ENCODE measurements at regions of chr11 and their contacts with region 1.

Region 1: GRCh38 chr11:46410021-46410420 is 18.4 kb upstream of the CHRM4 start:
- DNase-seq: peak in 1 of 2 experiments; percentile 55
- H3K4me3 ChIP-seq: no peak overlapping the region
- H3K27ac ChIP-seq: no peak overlapping the region
- H3K4me1 ChIP-seq: peaks cover 0 to 2% (median 0%) of the 10 kb centered on the region in 4 experiments; a peak in 1 of 7 replicates
- H3K27me3 ChIP-seq: no peaks in the 10 kb centered on the region
- CTCF ChIP-seq: peak; percentile 62 to 81 (median 72)
- EP300 ChIP-seq: no peak
- POLR2A ChIP-seq: no peak
- RAD21 ChIP-seq: peak; percentile 72 to 76

Region 2: DNA sequence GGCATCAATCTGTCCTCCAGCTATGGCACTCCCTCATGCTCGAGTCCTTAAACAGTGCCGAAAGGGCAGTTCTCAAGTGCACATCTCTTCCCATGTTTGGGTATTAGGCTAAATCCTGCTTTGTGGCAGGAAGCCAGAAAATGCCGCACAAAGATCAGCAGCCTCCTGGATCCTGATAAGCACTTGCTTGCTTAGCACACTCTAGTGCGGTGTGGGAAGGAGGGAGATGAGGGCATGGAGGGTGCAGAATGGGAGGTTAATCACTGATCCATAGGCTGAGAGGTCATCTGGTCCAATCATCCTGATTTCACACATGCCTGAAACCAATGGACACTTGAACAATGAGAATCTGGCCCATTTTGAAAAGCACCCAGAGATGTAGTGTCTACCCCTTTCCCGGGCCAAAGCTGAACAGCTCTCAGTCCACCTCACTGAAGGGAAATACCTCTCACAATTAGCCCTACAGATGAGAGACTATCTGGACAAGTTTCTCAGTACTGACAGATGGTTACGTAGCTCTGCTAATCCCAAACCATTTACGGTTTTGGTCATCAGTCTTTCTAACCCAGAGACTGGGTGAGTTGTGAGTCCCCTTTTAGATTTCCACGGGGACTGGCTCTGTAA is 11.3 kb after region 1 on chr11:
- CTCF ChIA-PET with region 1: interaction called, 18 read pairs
- POLR2A ChIA-PET with region 1: interaction called, 4 read pairs
- DNase-seq: no peak
- H3K4me3 ChIP-seq: no peak overlapping the region
- H3K27ac ChIP-seq: no peak overlapping the region
- H3K4me1 ChIP-seq: 0 out of 7 replicates have a peak, but pooled peaks cover 0 to 2% (median 0%) of the 10 kb centered on the region in 4 experiments
- H3K27me3 ChIP-seq: no peaks in the 10 kb centered on the region
- CTCF ChIP-seq: no peak
- EP300 ChIP-seq: no peak
- POLR2A ChIP-seq: no peak
- RAD21 ChIP-seq: no peak

Region 3: GRCh38 chr11:46537537-46538295 is 127.7 kb after region 1 on chr11:
- CTCF ChIA-PET with region 1: interaction called, 11 read pairs
- POLR2A ChIA-PET with region 1: no interaction called
- DNase-seq: peak; percentile 78 to 79
- H3K4me3 ChIP-seq: peak overlapping the region in 1 of 4 experiments; percentile 14; a peak in 2 of 8 replicates
- H3K27ac ChIP-seq: no peak overlapping the region
- H3K4me1 ChIP-seq: peaks cover 0 to 5% (median 5%) of the 10 kb centered on the region in 4 experiments; a peak in 6 of 7 replicates
- H3K27me3 ChIP-seq: no peaks in the 10 kb centered on the region
- CTCF ChIP-seq: peak; percentile 71 to 99 (median 93)
- EP300 ChIP-seq: peak in 1 of 2 experiments; percentile 61; a peak in 1 of 3 replicates
- POLR2A ChIP-seq: no peak
- RAD21 ChIP-seq: peak; percentile 95 to 96

Measured in H1 (cell line).